Posterior vena cava (tissue), 2 donors: ENCODE measurements at regions of chr2 and their contacts with region 1.

Region 1: GRCh38 chr2:127932199-127932878 is 46.6 kb upstream of the AMMECR1L start:
- DNase-seq: no peak

Region 2: DNA sequence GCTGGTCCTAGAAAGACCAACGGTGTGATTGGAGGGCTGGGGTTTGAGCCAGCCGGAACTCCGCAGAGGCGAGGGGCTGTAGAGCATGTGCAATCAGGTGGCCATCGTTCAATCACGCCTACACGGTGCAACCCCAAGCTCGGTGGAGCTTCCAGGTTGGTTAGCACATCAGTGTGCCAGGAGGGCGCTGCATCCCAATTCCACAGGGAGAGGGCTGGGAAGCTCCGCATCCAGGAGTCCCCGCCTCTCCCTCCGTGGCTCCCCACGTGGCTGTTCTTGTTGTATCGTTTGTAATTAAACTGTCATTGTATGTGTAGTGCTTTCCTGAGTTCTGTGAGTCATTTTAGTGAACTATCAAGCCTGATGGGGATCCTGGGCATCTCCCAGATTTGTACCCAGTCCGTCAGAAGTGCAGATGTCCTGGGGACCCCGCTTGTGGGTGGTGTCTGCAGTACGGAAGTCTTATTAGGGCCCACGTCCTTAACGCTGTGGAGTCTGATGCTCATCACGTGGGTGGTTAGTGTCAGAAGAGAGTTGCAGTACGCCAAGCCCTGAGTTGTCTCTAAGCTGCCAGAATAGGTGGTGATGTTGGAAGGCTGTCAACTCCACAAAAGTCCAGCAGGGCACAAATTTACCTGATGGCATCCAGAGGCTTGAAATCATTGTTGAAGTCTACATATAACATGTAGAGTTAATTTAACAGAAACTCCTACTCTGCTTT is 26.0 kb before region 1 on chr2:
- intact Hi-C with region 1: loop called in 1 of 2 experiments (anchors 2 kb)
- DNase-seq: peak; percentile 64